ENCODE measurements at regions of chr19 and their contacts with region 1.

Region 1: GRCh38 chr19:2236314-2237050 is at the starts of genes PLEKHJ1 and SF3A2:
- DNase-seq: peak; percentile 97
- ATAC-seq: peak; percentile 89 to 97 (median 95)
- H3K4me3 ChIP-seq: peak within 1 kb of the TSS; percentile 71 to 95 (median 89)
- H3K27ac ChIP-seq: peak within 1 kb of the TSS; percentile 92 to 100 (median 99)
- H3K4me1 ChIP-seq: peaks cover 29 to 82% (median 56%) of the 10 kb centered on the region in 9 donors
- H3K27me3 ChIP-seq: no peaks in the 10 kb centered on the region
- CTCF ChIP-seq: peak; percentile 97 to 100 (median 99)
- total RNA-seq, gene PLEKHJ1: 40.0 to 76.5 (median 45.0) TPM
- total RNA-seq, gene SF3A2: 24.6 to 45.2 (median 30.4) TPM

Region 2: DNA sequence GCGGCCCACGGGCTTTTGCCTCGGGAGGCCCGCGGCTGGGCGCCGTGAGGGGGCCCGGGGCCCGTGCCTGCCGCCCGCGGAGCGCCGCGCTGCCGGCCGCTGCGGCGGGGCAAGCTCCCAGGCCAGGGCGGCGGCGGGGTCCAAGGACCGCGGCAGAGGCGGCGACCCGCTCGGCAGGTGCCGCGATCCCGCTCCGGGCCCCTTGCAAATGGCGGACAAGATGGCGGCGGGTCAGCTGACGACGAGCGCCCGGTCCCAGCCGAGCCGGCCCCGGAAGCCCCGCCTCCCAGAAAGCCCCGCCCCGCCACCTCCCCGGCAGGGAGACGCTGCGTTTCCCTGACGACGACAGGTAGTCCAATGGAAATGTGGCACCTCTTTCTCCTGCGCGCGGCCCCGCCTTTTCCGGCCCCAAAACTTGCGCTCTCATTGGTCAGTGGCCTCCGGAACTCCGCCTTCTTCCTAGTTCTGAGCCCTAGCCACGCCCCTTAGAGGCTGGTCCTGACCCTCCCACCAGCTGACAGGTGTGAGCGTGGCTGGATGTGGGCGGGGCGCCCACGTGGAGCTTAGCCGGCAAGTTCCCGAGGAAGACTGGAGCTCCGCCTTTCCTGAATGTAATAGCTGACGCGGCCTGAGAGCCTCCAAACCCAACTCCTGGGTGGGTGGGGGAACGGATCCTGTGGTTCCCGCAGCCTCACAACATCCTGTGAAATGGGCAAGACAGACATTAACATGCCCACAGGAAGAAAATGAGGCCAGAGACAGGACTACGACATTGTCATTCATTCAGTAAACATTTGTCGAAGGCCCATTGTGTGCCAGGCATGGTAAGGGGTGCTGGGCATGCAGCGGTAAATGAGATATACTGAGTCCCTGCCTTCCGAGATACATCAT is 84.9 kb before region 1 on chr19 and contains the start of gene AP3D1:
- intact Hi-C with region 1: loop called in 4 of 10 experiments (anchors 1 to 10 kb)
- DNase-seq: peak; percentile 99 to 100
- ATAC-seq: peak; percentile 97 to 98 (median 98)
- H3K4me3 ChIP-seq: peak within 1 kb of the TSS; percentile 71 to 100 (median 95)
- H3K27ac ChIP-seq: peak within 1 kb of the TSS; percentile 76 to 95 (median 90)
- H3K4me1 ChIP-seq: peaks cover 8 to 47% (median 39%) of the 10 kb centered on the region in 9 donors
- H3K27me3 ChIP-seq: no peaks in the 10 kb centered on the region
- CTCF ChIP-seq: no peak
- total RNA-seq, gene AP3D1: 68.4 to 168 (median 81.9) TPM

Region 3: GRCh38 chr19:2168619-2169424 is 67.7 kb before region 1 on chr19:
- intact Hi-C with region 1: loop called in 4 of 10 experiments (anchors 5 kb)
- DNase-seq: peak; percentile 94 to 96
- ATAC-seq: peak; percentile 83 to 95 (median 92)
- H3K4me3 ChIP-seq: peak overlapping the region in 6 of 10 donors; percentile 22 to 35 (median 26)
- H3K27ac ChIP-seq: peak overlapping the region; percentile 80 to 95 (median 92)
- H3K4me1 ChIP-seq: peaks cover 59 to 93% (median 86%) of the 10 kb centered on the region in 9 donors
- H3K27me3 ChIP-seq: no peaks in the 10 kb centered on the region
- CTCF ChIP-seq: peak in 1 of 9 donors; percentile 39

Region 4: DNA sequence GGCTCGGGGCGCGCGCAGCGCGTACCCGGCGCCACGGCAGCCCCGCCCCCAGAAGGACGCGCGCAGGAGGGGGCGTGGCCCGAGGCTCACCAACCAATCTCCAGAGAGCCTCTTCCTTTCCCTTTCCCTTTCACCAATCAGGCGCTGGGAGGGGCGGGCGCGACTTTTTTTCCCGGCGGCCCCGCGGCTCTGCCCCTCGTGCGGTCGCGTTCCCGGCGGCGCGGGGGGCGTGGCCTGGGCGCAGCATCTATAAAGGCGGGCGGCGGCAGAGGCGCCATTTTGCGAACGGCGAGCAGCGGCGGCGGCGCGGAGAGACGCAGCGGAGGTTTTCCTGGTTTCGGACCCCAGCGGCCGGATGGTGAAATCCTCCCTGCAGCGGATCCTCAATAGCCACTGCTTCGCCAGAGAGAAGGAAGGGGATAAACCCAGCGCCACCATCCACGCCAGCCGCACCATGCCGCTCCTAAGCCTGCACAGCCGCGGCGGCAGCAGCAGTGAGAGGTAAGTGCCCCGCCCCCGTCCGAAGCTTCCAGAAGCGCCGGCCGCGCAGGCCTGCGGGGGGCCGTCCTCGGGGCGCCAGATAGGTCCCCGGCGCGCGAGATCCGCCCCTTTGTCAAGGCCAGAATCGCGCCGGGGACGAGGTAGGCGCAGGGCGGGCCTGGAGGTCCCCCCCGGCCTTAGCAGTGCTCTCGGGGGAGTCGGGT is 32.9 kb after region 1 on chr19:
- intact Hi-C with region 1: loop called (anchors 1 to 5 kb)
- DNase-seq: peak; percentile 99
- ATAC-seq: peak; percentile 86 to 93 (median 90)
- H3K4me3 ChIP-seq: peak overlapping the region; percentile 89 to 100 (median 100)
- H3K27ac ChIP-seq: peak overlapping the region; percentile 94 to 100 (median 99)
- H3K4me1 ChIP-seq: peaks cover 15 to 77% (median 46%) of the 10 kb centered on the region in 9 donors
- H3K27me3 ChIP-seq: no peaks in the 10 kb centered on the region
- CTCF ChIP-seq: peak in 1 of 9 donors; percentile 17

Region 5: GRCh38 chr19:2289714-2290435 is 53.4 kb after region 1 on chr19:
- intact Hi-C with region 1: no loop called
- DNase-seq: no peak
- ATAC-seq: peak in 5 of 8 donors; percentile 22 to 58 (median 34)
- H3K4me3 ChIP-seq: peak overlapping the region; percentile 10 to 63 (median 40)
- H3K27ac ChIP-seq: peak overlapping the region in 4 of 10 donors; percentile 36 to 91 (median 42)
- H3K4me1 ChIP-seq: peaks cover 21 to 55% (median 32%) of the 10 kb centered on the region in 9 donors
- H3K27me3 ChIP-seq: peaks cover 25 to 85% (median 62%) of the 10 kb centered on the region in 7 donors
- CTCF ChIP-seq: no peak

Region 6: GRCh38 chr19:2355168-2356035 is 118.9 kb after region 1 on chr19:
- intact Hi-C with region 1: no loop called
- DNase-seq: no peak
- ATAC-seq: no peak
- H3K4me3 ChIP-seq: no peak overlapping the region
- H3K27ac ChIP-seq: no peak overlapping the region
- H3K4me1 ChIP-seq: no peaks in the 10 kb centered on the region
- H3K27me3 ChIP-seq: peaks cover 0 to 8% (median 6%) of the 10 kb centered on the region in 7 donors
- CTCF ChIP-seq: no peak

Region 7: GRCh38 chr19:2391118-2391725 is 154.7 kb after region 1 on chr19:
- intact Hi-C with region 1: loop called in 5 of 10 experiments (anchors 5 to 10 kb)
- DNase-seq: peak in 1 of 2 donors; percentile 35
- ATAC-seq: peak in 5 of 8 donors; percentile 33 to 71 (median 43)
- H3K4me3 ChIP-seq: no peak overlapping the region
- H3K27ac ChIP-seq: no peak overlapping the region
- H3K4me1 ChIP-seq: peaks cover 0 to 5% (median 0%) of the 10 kb centered on the region in 9 donors
- H3K27me3 ChIP-seq: peaks cover 0 to 31% (median 6%) of the 10 kb centered on the region in 7 donors
- CTCF ChIP-seq: peak; percentile 62 to 82 (median 74)